A549 (cell line): ENCODE measurements at regions of chr7 and their contacts with region 1.

Region 1: GRCh38 chr7:102287111-102287980 is 678 bp downstream of the SH2B2 start:
- DNase-seq: peak in 1 of 2 experiments; percentile 31
- ATAC-seq: peak; percentile 55 to 80
- H3K4me3 ChIP-seq: peak overlapping the region; percentile 76
- H3K27ac ChIP-seq: peak overlapping the region; percentile 67 to 93
- H3K4me1 ChIP-seq: peaks cover 18% of the 10 kb centered on the region
- CTCF ChIP-seq: no peak
- EP300 ChIP-seq: no peak
- POLR2A ChIP-seq: no peak
- RAD21 ChIP-seq: no peak

Region 2: GRCh38 chr7:102390697-102391484 is 103.5 kb after region 1 on chr7:
- CTCF ChIA-PET with region 1: interaction called, 78 read pairs
- POLR2A ChIA-PET with region 1: no interaction called
- DNase-seq: peak; percentile 82 to 85
- ATAC-seq: peak; percentile 98
- H3K4me3 ChIP-seq: no peak overlapping the region
- H3K27ac ChIP-seq: no peak overlapping the region
- H3K4me1 ChIP-seq: peaks cover 6% of the 10 kb centered on the region
- CTCF ChIP-seq: peak; percentile 91
- EP300 ChIP-seq: no peak
- POLR2A ChIP-seq: no peak
- RAD21 ChIP-seq: peak; percentile 85 to 87